ENCODE measurements at regions of chr12 and their contacts with region 1.

Region 1: DNA sequence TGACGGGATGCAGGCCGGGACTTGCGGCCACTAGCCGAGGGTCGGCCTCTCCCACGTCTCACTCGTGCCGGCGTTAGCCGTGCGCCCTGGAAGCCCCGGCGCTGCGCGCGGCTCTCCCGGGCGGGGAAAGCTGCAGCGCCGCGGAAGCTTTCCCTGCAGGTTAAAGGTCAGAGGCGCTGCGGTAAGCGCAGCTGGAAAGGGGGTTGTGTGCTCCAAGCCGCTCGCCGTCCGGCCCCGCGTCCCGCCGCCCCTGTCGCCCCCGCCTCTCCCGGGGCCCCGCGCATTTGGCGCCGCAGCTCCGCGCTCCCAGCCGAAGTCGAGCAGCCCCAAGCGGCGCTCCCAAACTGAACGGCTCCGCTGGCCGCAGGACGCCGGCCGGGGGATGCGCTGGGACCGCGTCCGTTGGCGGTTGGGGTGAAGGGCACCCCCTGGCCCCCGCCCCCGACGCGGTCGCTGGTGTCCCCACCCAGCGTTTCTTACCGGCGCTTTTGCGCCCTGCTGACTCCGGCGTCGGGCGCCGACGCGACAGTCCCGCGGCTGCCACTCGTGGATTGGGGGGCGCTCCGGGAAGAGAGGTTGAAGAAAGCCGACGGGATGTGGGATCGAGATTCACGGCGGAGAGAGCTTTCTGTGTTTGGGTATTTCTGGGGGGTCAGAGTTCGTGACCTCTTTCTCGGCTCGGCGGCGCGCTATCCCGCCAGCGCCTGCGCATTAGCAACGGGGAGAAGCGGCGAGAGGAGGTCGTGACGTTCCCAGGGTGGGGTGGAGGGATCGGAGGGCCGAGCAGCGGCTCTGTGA is at the start of gene NR2C1:
- DNase-seq: peak; percentile 97
- ATAC-seq: peak; percentile 97
- H3K4me3 Mint-ChIP-seq: peak within 1 kb of the TSS; percentile 90
- H3K27ac Mint-ChIP-seq: peak within 1 kb of the TSS; percentile 91
- H3K4me1 Mint-ChIP-seq: peaks cover 16% of the 10 kb centered on the region
- H3K27me3 Mint-ChIP-seq: no peaks in the 10 kb centered on the region
- total RNA-seq, gene NR2C1: 35.5 to 40.9 TPM

Region 2: GRCh38 chr12:94740601-94741362 is 332.3 kb before region 1 on chr12:
- CTCF ChIA-PET with region 1: no interaction called
- DNase-seq: no peak
- ATAC-seq: no peak
- H3K4me3 Mint-ChIP-seq: no peak overlapping the region
- H3K27ac Mint-ChIP-seq: no peak overlapping the region
- H3K4me1 Mint-ChIP-seq: peaks cover 6% of the 10 kb centered on the region
- H3K27me3 Mint-ChIP-seq: peaks cover 35% of the 10 kb centered on the region

Region 3: GRCh38 chr12:95085612-95086011 is 12.5 kb after region 1 on chr12:
- CTCF ChIA-PET with region 1: interaction called, 11 read pairs
- DNase-seq: no peak
- ATAC-seq: peak; percentile 39
- H3K4me3 Mint-ChIP-seq: no peak overlapping the region
- H3K27ac Mint-ChIP-seq: no peak overlapping the region
- H3K4me1 Mint-ChIP-seq: peaks cover 2% of the 10 kb centered on the region
- H3K27me3 Mint-ChIP-seq: peaks cover 18% of the 10 kb centered on the region

Region 4: GRCh38 chr12:95143621-95144205 is 70.6 kb after region 1 on chr12:
- CTCF ChIA-PET with region 1: no interaction called
- DNase-seq: no peak
- ATAC-seq: no peak
- H3K4me3 Mint-ChIP-seq: no peak overlapping the region
- H3K27ac Mint-ChIP-seq: no peak overlapping the region
- H3K4me1 Mint-ChIP-seq: no peaks in the 10 kb centered on the region
- H3K27me3 Mint-ChIP-seq: no peaks in the 10 kb centered on the region